Colonic mucosa (tissue), 4 donors: ENCODE measurements at regions of chr5 and their contacts with region 1.

Region 1: GRCh38 chr5:134465816-134466240 is 54.1 kb upstream of the CDKN2AIPNL start:
- DNase-seq: peak; percentile 93
- H3K4me3 ChIP-seq: peak overlapping the region; percentile 42
- H3K27ac ChIP-seq: peak overlapping the region; percentile 99
- H3K4me1 ChIP-seq: peaks cover 16% of the 10 kb centered on the region
- H3K27me3 ChIP-seq: no peaks in the 10 kb centered on the region
- CTCF ChIP-seq: no peak

Region 2: DNA sequence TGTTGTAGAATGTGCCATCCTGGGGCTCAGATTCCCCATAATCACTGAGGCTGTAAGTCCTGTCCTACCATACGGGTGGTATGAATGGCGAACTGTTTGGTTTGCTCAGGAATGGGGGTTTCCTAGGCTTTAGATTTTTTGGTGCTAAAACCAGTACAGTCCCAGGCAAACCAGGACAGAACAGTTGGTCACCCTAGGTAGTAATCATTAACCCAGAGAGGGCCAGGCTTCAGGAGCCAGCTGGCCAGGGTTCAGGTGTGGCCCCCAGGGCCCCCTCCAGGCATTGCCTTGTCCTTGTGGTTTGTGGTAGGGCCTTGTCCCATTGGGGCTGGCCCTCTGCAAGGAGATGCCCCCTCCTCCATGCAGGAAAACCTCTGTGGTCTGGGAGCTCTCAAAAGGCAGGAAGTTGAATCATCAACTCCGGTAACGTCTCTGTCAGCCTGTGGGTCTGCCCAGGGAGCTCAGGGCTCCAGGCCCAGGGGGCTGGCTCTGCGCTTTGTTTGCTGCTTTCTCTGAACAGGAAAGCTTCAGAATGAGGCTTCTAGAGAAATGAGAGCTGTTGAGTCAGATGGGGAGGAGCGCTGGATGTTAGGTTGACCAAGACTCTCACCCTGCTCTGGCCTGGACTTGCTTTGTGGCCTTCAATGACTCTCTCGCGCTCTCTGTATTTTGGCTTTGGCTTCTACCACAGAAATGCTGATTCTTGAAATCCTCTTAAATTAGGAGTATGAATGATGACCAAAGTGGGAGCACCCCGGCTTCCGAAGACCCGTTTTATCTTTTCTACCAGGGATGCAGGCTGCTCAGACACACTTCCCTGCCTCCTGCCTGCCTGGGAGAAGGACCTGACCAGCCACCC is 37.5 kb after region 1 on chr5:
- intact Hi-C with region 1: loop called (anchors 5 kb)
- DNase-seq: peak; percentile 65
- H3K4me3 ChIP-seq: no peak overlapping the region
- H3K27ac ChIP-seq: peak overlapping the region; percentile 76
- H3K4me1 ChIP-seq: peaks cover 16% of the 10 kb centered on the region
- H3K27me3 ChIP-seq: no peaks in the 10 kb centered on the region
- CTCF ChIP-seq: no peak

Region 3: DNA sequence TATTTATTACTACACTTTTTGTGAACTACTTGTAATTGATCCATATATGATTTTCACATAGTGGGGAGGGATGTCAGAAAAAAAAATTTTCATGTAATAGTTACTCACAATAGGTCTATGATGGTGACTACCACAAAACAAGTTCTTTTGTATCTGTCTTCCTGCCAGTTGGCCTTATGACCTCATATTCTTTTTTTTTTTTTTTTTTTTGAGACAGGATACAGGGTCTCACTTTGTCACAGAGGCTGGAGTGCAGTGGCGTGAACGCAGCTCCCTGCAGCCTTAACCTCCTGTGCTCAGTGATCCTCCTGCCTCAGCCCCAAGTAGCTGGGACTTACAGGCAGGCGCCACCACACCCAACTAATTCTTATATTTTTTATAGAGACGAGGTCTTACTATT is 193.6 kb after region 1 on chr5:
- intact Hi-C with region 1: no loop called
- DNase-seq: no peak
- H3K4me3 ChIP-seq: no peak overlapping the region
- H3K27ac ChIP-seq: no peak overlapping the region
- H3K4me1 ChIP-seq: no peaks in the 10 kb centered on the region
- H3K27me3 ChIP-seq: no peaks in the 10 kb centered on the region
- CTCF ChIP-seq: no peak